ENCODE measurements at regions of chr6 and their contacts with region 1.

Region 1: GRCh38 chr6:107847844-107848802 is 24.0 kb upstream of the SCML4 start:
- DNase-seq: peak; percentile 87 to 92
- ATAC-seq: peak; percentile 97 to 99 (median 98)
- H3K4me3 ChIP-seq: peak overlapping the region; percentile 62
- H3K27ac ChIP-seq: no peak overlapping the region
- H3K4me1 ChIP-seq: no peaks in the 10 kb centered on the region
- H3K27me3 ChIP-seq: peaks cover 0 to 2% (median 0%) of the 10 kb centered on the region in 3 donors
- CTCF ChIP-seq: peak; percentile 95

Region 2: DNA sequence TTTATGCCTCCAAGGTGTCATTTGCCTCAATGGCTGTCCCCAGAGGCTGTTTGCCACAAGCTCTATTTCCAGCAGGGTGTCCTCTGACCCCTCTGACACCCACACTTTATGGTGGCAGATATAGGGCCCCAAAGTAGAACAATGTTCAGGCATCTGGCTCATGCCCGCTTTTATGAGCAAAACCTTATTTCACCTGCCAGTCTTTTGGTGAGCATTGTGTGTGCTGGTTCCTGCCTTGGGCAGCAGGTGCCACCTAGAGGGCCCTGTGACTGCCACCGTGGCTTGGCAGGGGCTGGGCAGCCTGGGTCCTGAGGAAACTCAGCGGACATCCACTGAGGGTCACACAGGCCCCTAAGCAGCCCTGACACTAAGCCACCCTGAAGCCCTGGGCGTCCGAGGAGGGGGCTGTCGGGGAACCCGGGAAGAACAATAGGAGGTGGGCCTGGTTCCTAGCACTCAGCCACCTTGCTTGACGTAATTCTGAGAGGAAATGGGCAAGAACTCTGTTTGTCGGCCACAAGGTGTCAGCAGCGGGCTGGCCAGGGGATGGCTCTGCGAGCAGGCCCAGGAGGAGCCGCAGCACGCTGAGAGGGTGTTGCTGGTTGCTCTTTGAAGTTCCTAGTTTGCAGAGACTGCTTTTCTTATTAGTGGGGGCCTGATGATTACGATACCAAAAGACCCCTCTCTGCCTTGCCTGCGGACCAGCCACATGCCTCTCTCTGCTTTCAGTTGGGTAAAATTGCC is 173.0 kb before region 1 on chr6:
- intact Hi-C with region 1: loop called (anchors 1 to 2 kb)
- DNase-seq: peak; percentile 81 to 94
- ATAC-seq: peak; percentile 85 to 96 (median 88)
- H3K4me3 ChIP-seq: peak overlapping the region; percentile 44
- H3K27ac ChIP-seq: peak overlapping the region; percentile 56
- H3K4me1 ChIP-seq: peaks cover 27% of the 10 kb centered on the region
- H3K27me3 ChIP-seq: no peaks in the 10 kb centered on the region
- CTCF ChIP-seq: peak; percentile 91

Region 3: GRCh38 chr6:107704347-107705013 is 143.6 kb before region 1 on chr6:
- intact Hi-C with region 1: loop called in 1 of 2 experiments (anchors 10 kb)
- DNase-seq: no peak
- ATAC-seq: peak; percentile 47 to 74 (median 60)
- H3K4me3 ChIP-seq: no peak overlapping the region
- H3K27ac ChIP-seq: no peak overlapping the region
- H3K4me1 ChIP-seq: no peaks in the 10 kb centered on the region
- H3K27me3 ChIP-seq: no peaks in the 10 kb centered on the region
- CTCF ChIP-seq: peak; percentile 89

Region 4: GRCh38 chr6:107731422-107732319 is 116.5 kb before region 1 on chr6:
- intact Hi-C with region 1: loop called (anchors 5 to 10 kb)
- DNase-seq: no peak
- ATAC-seq: no peak
- H3K4me3 ChIP-seq: no peak overlapping the region
- H3K27ac ChIP-seq: no peak overlapping the region
- H3K4me1 ChIP-seq: no peaks in the 10 kb centered on the region
- H3K27me3 ChIP-seq: no peaks in the 10 kb centered on the region
- CTCF ChIP-seq: no peak

Measured in psoas muscle (tissue), 8 donors.